ENCODE measurements at regions of chr2 and their contacts with region 1.

Region 1: GRCh38 chr2:11405599-11406266 is 60.2 kb downstream of the E2F6 start:
- DNase-seq: no peak
- H3K4me3 ChIP-seq: no peak overlapping the region
- H3K27ac ChIP-seq: no peak overlapping the region
- H3K4me1 ChIP-seq: peaks cover 6% of the 10 kb centered on the region
- H3K27me3 ChIP-seq: no peaks in the 10 kb centered on the region
- CTCF ChIP-seq: no peak
- POLR2A ChIP-seq: no peak

Region 2: GRCh38 chr2:11292464-11293255 is 113.1 kb before region 1 on chr2:
- CTCF ChIA-PET with region 1: no interaction called
- POLR2A ChIA-PET with region 1: no interaction called
- dilution Hi-C with region 1: no loop called
- intact Hi-C with region 1: loop called (anchors 2 kb)
- DNase-seq: peak; percentile 93
- H3K4me3 ChIP-seq: no peak overlapping the region
- H3K27ac ChIP-seq: peak overlapping the region; percentile 73
- H3K4me1 ChIP-seq: peaks cover 32% of the 10 kb centered on the region
- H3K27me3 ChIP-seq: no peaks in the 10 kb centered on the region
- CTCF ChIP-seq: no peak
- POLR2A ChIP-seq: no peak

Region 3: DNA sequence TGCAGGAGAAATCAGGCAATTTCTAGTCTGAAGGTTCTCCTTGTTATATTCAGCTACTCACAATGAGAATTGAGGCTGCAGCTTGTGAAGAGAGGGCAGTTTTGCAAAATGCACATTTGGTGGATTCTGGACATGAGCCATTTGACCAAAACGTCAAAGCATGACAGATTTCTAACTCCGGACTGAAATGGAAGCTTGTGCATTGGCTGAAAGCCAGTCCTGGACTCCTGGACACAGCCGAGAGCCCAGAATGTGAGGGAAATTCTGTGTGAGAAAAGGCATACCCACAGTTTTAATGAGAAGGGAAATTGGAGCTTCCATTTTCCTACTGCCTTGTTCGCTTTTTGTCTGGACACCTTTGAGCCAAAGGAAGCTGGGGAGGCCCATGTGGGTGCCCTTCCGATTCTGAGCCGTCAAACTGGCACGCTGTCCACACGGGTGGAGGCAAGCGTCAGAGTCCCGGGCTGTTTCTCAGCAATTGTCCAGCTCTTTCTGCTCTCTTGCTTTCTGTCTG is 37.6 kb before region 1 on chr2:
- CTCF ChIA-PET with region 1: interaction called, 7 read pairs
- POLR2A ChIA-PET with region 1: interaction called, 3 read pairs
- dilution Hi-C with region 1: no loop called
- intact Hi-C with region 1: loop called (anchors 5 kb)
- DNase-seq: peak; percentile 65
- H3K4me3 ChIP-seq: peak overlapping the region in 1 of 3 experiments; percentile 32
- H3K27ac ChIP-seq: peak overlapping the region; percentile 16
- H3K4me1 ChIP-seq: peaks cover 16% of the 10 kb centered on the region
- H3K27me3 ChIP-seq: no peaks in the 10 kb centered on the region
- CTCF ChIP-seq: no peak
- POLR2A ChIP-seq: no peak

Region 4: GRCh38 chr2:11387854-11388692 is 17.7 kb before region 1 on chr2:
- CTCF ChIA-PET with region 1: interaction called, 4 read pairs
- POLR2A ChIA-PET with region 1: no interaction called
- dilution Hi-C with region 1: no loop called
- intact Hi-C with region 1: loop called (anchors 2 kb)
- DNase-seq: no peak
- H3K4me3 ChIP-seq: no peak overlapping the region
- H3K27ac ChIP-seq: no peak overlapping the region
- H3K4me1 ChIP-seq: peaks cover 20% of the 10 kb centered on the region
- H3K27me3 ChIP-seq: no peaks in the 10 kb centered on the region
- CTCF ChIP-seq: no peak
- POLR2A ChIP-seq: no peak

Region 5: GRCh38 chr2:11743846-11744553 is 338.3 kb after region 1 on chr2:
- CTCF ChIA-PET with region 1: no interaction called
- POLR2A ChIA-PET with region 1: no interaction called
- dilution Hi-C with region 1: no loop called
- intact Hi-C with region 1: no loop called
- DNase-seq: peak; percentile 99
- H3K4me3 ChIP-seq: peak overlapping the region in 1 of 3 experiments; percentile 20
- H3K27ac ChIP-seq: peak overlapping the region; percentile 82
- H3K4me1 ChIP-seq: peaks cover 55% of the 10 kb centered on the region
- H3K27me3 ChIP-seq: no peaks in the 10 kb centered on the region
- CTCF ChIP-seq: no peak
- POLR2A ChIP-seq: no peak

Measured in endothelial cell of umbilical vein (primary cell).